AG04449 (cell line): ENCODE measurements at regions of chr19 and their contacts with region 1.

Region 1: DNA sequence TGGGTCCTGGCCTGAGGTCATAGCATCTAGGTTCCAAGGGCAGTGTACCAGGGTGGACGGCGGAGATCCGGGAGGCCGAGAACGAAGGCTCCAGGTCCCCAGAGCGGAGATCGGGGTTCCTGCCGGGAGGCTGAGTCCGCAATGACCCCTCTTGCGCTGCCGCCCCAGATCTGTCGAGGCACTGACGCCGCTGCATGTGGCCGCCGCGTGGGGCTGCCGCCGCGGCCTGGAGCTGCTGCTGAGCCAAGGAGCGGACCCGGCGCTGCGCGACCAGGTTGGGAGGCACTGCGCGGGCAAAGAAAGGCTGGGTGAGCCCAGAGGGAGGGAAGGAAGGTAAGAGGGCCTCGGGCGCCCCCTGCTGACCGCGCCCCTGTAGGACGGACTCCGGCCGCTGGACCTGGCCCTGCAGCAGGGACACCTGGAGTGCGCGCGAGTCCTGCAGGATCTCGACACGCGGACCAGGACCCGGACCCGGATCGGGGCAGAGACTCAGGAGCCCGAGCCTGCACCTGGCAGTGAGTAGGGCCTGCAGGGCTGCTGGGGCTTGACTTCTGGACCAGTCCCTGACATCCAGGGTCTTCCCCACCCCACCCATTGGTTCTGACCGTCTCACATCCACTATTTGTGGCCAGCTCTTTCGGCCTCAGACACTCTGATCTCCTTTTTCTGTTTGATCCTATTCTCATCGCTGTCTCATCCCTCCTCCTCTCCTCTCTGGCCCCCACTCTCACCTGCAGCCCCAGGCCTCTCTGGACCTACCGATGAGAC is 971 bp downstream of the ANKLE1 start:
- DNase-seq: no peak
- H3K4me3 ChIP-seq: peak overlapping the region; percentile 45
- CTCF ChIP-seq: peak; percentile 98

Region 2: GRCh38 chr19:17069218-17069617 is 213.5 kb before region 1 on chr19:
- CTCF ChIA-PET with region 1: interaction called, 80 read pairs
- POLR2A ChIA-PET with region 1: no interaction called
- DNase-seq: no peak
- H3K4me3 ChIP-seq: no peak overlapping the region
- CTCF ChIP-seq: no peak

Region 3: GRCh38 chr19:17125062-17125714 is 157.5 kb before region 1 on chr19:
- CTCF ChIA-PET with region 1: no interaction called
- POLR2A ChIA-PET with region 1: no interaction called
- DNase-seq: no peak
- H3K4me3 ChIP-seq: no peak overlapping the region
- CTCF ChIP-seq: no peak

Region 4: DNA sequence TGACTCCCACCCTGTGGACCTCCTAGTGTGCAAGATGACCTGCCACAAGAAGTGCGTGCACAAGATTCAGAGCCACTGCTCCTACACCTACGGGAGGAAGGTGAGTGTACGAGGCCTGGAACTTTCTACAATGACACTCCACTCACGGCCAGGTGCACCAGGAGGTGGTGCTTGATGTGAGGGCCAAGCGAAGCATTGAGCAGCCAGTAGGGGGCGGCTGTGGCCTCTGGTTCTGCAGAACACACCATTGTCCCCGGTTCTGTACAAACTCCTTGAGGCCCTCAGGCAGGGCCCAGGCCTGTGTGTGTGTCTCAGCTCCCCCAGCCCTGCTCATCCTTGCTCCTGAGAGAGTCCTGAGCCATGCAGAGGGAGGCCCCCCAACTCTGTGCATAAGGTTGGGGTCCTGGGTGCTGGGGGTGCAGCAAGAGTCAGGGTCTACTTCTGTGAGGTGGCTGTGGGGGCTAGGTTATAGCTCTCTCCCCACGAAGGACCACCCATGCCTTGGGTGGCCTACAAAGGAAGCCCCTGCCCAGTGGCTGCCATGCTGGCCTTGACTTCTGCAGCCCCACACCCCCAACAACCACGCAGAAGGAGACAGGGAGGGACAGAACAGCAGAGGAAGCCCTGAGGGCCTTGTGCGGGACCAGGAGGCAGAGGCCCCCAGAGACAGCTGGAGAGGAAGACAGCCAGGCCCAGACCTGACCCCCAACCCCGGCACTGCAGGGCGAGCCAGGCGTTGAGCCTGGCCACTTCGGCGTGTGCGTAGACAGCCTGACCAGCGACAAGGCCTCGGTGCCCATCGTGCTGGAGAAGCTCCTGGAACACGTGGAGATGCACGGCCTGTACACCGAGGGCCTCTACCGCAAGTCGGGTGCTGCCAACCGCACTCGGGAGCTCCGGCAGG is 77.2 kb before region 1 on chr19:
- CTCF ChIA-PET with region 1: interaction called, 44 read pairs
- POLR2A ChIA-PET with region 1: no interaction called
- DNase-seq: no peak
- H3K4me3 ChIP-seq: no peak overlapping the region
- CTCF ChIP-seq: peak; percentile 77

Region 5: DNA sequence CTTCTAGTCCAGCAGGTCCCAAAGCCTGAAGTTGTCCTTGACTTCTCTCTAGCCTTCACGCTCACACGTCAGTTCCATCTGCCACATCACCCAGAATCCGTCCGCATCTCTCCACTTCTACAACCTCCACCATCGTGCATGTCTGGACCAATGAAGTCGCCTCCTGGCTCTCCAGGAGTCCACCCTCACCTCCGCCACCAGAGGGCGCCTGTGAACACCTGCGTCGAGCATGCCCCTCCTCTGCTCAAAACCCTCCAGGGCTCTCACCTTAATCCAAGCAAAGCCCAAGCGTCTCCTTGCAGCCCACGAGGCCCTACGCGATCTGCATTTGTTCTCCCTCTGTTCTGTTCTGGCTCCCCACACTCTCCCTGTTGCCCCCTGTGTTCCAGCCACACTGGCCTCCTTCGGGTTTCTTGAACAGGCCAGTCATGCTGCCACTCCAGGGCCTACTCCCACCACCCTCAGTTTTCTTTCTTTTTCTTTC is 21.8 kb before region 1 on chr19:
- CTCF ChIA-PET with region 1: interaction called, 23 read pairs
- POLR2A ChIA-PET with region 1: no interaction called
- DNase-seq: no peak
- H3K4me3 ChIP-seq: no peak overlapping the region
- CTCF ChIP-seq: peak; percentile 92

Region 6: DNA sequence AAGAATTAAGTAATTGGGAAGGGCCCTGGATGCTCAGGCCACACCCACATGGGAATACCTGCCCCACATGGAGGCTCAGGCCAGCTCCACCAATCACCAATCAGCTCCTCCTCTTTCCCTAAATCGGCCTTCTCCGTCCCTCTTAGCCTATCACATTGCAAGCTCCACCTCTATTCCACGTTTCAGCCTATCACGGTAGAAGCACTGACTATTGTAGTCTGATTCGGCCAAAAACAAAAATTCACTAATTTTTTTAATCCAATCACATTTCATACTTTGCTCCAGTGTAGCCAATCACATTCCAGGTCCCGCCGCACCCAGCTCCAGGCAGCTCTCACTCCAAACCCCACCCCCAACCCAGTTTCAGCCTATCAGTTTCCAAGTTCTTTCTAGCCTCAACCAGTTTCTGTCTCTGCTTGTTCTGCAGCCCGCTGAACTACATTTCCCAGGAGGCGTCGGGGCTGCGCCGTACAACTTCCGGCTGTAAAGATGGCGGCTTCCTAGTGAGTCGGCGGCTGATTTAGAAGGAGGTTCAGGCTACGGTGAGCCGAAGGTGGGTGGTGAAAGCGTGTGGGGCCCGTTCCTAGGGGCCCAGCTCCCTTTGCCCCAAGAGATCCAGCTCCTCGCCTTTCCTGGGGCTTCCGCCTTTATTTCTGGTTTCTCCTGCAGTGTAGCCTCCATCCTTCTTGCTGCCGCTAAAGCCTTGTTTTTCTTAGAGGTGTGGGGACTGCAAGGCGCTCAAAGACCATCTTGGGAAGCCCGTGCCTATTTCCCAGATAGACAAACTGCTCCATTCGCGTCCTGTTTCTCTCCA is 15.5 kb before region 1 on chr19 and contains the start of gene BABAM1:
- CTCF ChIA-PET with region 1: interaction called, 23 read pairs
- POLR2A ChIA-PET with region 1: interaction called, 5 read pairs
- DNase-seq: peak; percentile 99
- H3K4me3 ChIP-seq: peak within 1 kb of the TSS; percentile 98
- CTCF ChIP-seq: no peak

Region 7: DNA sequence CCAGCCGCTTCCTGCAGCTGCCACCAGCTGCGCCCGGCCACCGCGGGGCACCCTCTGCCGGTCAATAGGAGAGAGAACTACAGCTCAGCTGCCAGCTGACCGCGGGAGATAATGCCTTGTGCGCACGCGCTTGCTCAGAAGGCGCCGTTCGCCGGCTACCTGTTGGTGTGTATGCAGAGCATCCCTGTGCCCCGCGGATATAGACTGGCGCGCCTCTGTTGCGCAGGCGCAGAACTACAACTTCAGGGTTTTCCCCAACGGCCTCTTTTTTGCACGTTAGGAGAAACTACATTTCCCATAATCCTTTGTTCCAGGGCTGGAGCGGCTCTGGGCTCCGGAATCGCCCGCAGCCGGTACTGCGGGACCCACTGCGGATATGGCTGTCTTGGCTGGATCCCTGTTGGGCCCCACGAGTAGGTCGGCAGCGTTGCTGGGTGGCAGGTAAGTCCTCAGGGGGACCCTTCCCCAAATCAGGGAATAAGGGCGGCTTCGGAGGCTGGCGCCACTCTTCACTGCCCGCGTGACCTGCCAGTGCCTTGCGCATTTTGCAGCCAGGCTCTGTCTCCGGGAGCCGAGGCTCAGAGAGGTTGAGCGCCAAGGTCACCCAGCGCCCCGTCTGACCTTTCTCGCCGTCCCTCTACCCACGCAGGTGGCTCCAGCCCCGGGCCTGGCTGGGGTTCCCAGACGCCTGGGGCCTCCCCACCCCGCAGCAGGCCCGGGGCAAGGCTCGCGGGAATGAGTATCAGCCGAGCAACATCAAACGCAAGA is 23.0 kb after region 1 on chr19 and contains the start of gene MRPL34:
- CTCF ChIA-PET with region 1: interaction called, 11 read pairs
- POLR2A ChIA-PET with region 1: interaction called, 3 read pairs
- DNase-seq: peak; percentile 94
- H3K4me3 ChIP-seq: peak within 1 kb of the TSS; percentile 75
- CTCF ChIP-seq: peak; percentile 89

Region 8: DNA sequence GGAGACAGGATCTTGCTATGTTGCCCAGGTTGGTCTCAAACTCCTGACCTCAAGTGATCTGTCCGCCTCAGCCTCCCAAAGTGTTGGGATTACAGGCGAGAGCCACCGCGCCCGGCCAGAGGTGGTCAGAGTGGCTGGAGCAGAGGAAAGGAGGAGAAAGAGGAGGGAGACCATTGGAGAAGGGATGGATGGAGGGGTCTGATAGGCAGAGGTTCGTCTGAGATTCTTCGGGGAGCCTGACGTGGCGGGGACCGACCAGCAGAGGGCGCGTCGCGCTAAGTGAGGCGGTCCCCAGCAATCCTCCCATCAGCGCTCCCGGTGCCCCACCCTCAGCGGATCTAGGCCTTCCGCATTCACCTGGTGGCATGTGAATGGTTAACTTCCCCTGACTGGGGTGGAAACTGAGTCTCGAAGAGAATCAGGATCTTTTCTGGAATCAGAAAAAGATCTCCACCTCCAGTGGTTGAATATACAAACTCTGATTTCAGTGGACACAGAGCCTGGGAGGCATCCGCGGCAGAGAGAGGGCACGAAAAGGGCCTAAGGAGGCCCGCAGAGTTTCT is 63.5 kb after region 1 on chr19:
- CTCF ChIA-PET with region 1: no interaction called
- POLR2A ChIA-PET with region 1: no interaction called
- DNase-seq: no peak
- H3K4me3 ChIP-seq: no peak overlapping the region
- CTCF ChIP-seq: peak; percentile 93

Region 9: DNA sequence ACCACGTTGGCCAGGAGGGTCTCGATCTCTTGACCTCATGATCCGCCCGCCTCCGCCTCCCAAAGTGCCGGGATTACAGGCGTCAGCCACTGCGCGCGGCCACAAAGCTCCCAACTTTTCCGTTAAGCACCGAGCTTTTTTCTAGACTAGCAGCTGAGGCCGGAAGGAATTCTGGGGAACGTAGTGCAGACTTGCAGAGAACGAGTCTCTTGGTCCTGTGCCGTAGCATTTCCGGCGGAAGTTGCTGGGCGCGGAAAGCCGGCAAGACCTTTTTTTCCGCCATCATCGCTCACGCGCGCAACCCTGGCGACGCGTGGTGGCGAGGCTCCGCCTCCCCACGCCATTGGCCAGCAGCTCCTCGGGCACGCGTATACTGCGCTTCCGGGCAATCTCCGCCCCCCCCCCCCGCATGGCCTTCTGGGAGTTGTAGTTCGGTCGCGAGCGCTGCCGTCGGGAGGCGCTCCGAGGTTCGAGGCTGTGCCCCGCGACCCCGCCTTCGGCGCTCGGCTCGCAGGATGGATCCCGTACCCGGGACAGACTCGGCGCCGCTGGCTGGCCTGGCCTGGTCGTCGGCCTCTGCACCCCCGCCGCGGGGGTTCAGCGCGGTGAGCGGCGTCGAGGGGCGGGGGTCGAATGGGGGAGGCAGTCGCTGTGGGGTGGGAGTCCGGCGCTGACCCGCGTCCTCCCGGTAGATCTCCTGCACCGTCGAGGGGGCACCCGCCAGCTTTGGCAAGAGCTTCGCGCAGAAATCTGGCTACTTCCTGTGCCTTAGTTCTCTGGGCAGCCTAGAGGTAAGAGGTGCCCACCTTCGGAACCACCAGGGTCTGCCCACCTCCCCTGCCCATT is 137.2 kb after region 1 on chr19 and contains the start of gene MVB12A:
- CTCF ChIA-PET with region 1: no interaction called
- POLR2A ChIA-PET with region 1: no interaction called
- DNase-seq: peak; percentile 95
- H3K4me3 ChIP-seq: peak within 1 kb of the TSS; percentile 82
- CTCF ChIP-seq: no peak